ENCODE measurements at regions of chr1 and their contacts with region 1.

Region 1: GRCh38 chr1:70205434-70206118 is at the start of gene LRRC40:
- DNase-seq: peak; percentile 98
- ATAC-seq: peak; percentile 92
- H3K4me3 Mint-ChIP-seq: peak within 1 kb of the TSS; percentile 96
- H3K27ac Mint-ChIP-seq: peak within 1 kb of the TSS; percentile 99
- H3K4me1 Mint-ChIP-seq: peaks cover 47% of the 10 kb centered on the region
- H3K27me3 Mint-ChIP-seq: no peaks in the 10 kb centered on the region
- total RNA-seq, gene LRRC40: 16.9 to 18.8 TPM

Region 2: DNA sequence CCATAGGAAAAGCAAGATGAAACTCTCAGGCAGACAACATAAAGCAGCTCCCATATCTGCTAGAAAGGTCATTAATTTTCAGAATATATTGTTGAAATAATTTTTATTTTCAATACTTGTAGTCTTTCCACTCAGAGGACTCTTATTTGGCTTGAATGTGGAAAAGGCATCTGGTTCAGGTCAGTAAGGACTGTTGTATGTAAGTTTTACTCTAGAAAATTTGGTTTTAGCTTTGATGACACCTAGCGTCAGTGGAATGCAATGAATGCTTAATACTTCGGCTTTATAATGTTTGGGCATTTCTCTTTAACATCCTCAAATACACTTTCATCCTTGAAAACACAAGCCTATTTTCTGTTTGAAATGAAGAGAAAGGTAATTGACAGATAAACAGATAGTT is 63.5 kb before region 1 on chr1:
- POLR2A ChIA-PET with region 1: no interaction called
- DNase-seq: no peak
- ATAC-seq: no peak
- H3K4me3 Mint-ChIP-seq: no peak overlapping the region
- H3K27ac Mint-ChIP-seq: no peak overlapping the region
- H3K4me1 Mint-ChIP-seq: no peaks in the 10 kb centered on the region
- H3K27me3 Mint-ChIP-seq: no peaks in the 10 kb centered on the region

Region 3: GRCh38 chr1:70221241-70222121 is 15.9 kb after region 1 on chr1 and contains the start of gene SRSF11:
- POLR2A ChIA-PET with region 1: interaction called, 86 read pairs
- DNase-seq: peak; percentile 97
- ATAC-seq: peak; percentile 95
- H3K4me3 Mint-ChIP-seq: peak within 1 kb of the TSS; percentile 90
- H3K27ac Mint-ChIP-seq: peak within 1 kb of the TSS; percentile 96
- H3K4me1 Mint-ChIP-seq: peaks cover 36% of the 10 kb centered on the region
- H3K27me3 Mint-ChIP-seq: no peaks in the 10 kb centered on the region
- total RNA-seq, gene SRSF11: 242 to 252 TPM

Region 4: GRCh38 chr1:70354332-70355110 is 148.9 kb after region 1 on chr1 and contains the start of gene ANKRD13C:
- POLR2A ChIA-PET with region 1: interaction called, 26 read pairs
- DNase-seq: peak; percentile 90
- ATAC-seq: peak; percentile 90
- H3K4me3 Mint-ChIP-seq: peak within 1 kb of the TSS; percentile 93
- H3K27ac Mint-ChIP-seq: peak within 1 kb of the TSS; percentile 97
- H3K4me1 Mint-ChIP-seq: peaks cover 30% of the 10 kb centered on the region
- H3K27me3 Mint-ChIP-seq: no peaks in the 10 kb centered on the region
- total RNA-seq, gene ANKRD13C: 25.9 to 28.1 TPM

Region 5: DNA sequence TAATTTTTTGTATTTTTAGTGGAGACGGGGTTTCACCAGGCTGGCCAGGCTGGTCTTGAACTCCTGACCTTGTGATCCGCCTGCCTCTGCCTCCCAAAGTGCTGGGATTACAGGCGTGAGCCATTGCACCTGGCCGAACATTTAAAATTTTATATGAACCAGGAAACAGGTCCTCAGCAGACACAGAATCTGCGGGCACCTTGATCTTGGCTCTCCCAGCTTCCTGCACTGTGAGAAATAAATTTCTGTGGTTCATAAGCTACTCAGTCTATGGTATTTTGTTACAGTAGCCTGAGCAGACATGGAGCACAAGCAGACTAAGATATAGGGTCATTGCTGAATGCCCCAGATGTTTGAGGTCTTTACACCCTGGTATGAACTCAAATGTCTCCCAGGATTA is 181.9 kb after region 1 on chr1:
- POLR2A ChIA-PET with region 1: no interaction called
- DNase-seq: no peak
- ATAC-seq: no peak
- H3K4me3 Mint-ChIP-seq: no peak overlapping the region
- H3K27ac Mint-ChIP-seq: no peak overlapping the region
- H3K4me1 Mint-ChIP-seq: no peaks in the 10 kb centered on the region
- H3K27me3 Mint-ChIP-seq: peaks cover 14% of the 10 kb centered on the region

Region 6: GRCh38 chr1:71080739-71081696 is 875.4 kb after region 1 on chr1 and contains the start of gene ZRANB2:
- POLR2A ChIA-PET with region 1: interaction called, 13 read pairs
- DNase-seq: peak; percentile 82
- ATAC-seq: peak; percentile 98
- H3K4me3 Mint-ChIP-seq: peak within 1 kb of the TSS; percentile 98
- H3K27ac Mint-ChIP-seq: peak within 1 kb of the TSS; percentile 99
- H3K4me1 Mint-ChIP-seq: peaks cover 15% of the 10 kb centered on the region
- H3K27me3 Mint-ChIP-seq: peaks cover 7% of the 10 kb centered on the region
- total RNA-seq, gene ZRANB2: 123 to 129 TPM

Measured in activated naive CD8-positive, alpha-beta T cell treated with anti-CD3 and anti-CD28 coated beads, Interleukin-2, amount 10 ng/mL, durations not matched to agents 7 days and 5 days (primary cell).